Ascending aorta (tissue), 2 donors: ENCODE measurements at regions of chrX and their contacts with region 1.

Region 1: DNA sequence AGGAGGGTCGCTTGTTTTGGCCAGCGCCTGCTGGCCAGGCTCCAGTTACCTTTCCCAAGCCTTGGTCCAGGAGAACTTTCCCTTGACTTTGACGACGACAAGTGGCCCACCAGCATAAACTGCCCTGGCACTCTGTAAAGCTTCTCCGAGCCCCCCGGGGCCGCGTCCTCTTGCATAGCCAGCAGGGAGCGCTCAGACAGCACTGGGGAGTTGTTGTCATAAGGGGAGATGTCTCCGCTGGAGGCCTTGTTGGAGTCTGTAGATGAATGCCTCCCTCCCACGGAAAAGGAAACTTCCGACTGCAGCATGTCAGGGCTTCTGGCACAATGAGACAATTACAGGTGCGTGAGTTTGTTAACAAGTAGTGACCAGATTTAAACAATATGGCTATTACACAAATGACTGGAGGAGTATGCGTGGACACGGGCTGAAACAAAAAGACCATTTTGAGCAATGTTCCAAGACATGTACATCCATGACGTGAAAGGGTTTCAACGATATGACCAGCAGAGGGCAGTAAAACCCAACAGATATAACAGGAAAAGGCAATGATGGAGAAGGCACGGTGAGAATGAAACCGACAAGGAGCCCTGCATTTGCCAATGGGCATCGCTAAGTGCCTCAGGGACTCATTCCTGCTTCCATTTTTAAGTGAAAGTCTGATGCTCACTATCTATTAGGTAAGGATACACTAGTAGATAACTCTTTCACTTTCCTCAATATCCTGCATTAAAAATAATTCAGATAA is 33.0 kb downstream of the HCCS start:
- DNase-seq: peak in 1 of 2 donors; percentile 76
- H3K4me3 ChIP-seq: no peak overlapping the region
- H3K27ac ChIP-seq: no peak overlapping the region
- H3K4me1 ChIP-seq: no peaks in the 10 kb centered on the region
- H3K27me3 ChIP-seq: no peaks in the 10 kb centered on the region
- CTCF ChIP-seq: peak; percentile 51 to 66 (median 59)

Region 2: DNA sequence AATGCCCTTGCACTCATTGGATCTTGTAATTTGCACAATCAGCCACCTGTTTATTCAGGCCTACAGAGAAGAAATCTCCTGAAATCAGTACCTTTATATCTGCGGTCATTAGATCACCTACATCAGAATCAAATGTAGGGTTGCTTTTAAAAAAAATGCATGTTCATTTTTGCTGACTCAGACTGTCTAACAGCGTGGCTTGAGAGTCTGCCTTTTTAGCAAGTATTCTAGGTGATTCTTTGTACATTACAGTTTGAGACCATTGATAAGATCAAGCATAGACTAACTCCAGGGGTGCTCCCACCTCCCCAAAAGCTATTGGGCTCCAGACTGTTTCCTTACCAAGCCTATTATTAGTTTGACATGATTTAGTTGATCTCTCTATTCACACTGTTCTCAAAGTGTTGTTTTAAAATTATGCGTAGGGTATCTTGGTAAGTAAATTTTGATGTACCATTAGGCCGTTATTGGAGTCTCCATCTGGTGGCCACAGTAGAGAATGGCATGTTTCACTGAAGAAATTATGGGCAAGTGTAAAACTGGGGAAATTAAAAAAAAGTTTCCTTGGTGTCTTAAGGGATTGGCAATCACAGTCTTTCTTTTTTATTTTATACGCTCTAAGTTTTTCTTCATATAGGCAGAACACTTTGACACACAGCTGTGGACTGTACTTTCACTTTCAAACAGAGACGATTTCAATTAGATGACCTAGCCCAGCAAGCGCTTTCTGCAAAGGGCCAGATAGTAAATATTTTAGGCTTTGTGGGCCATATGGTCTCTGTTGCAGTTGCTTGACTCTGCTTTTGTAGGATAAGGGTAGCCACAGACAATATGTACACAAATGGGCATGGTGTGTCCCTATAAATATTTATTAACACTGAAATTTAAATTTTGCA is 580.3 kb after region 1 on chrX:
- intact Hi-C with region 1: loop called (anchors 2 kb)
- DNase-seq: no peak
- H3K4me3 ChIP-seq: no peak overlapping the region
- H3K27ac ChIP-seq: no peak overlapping the region
- H3K4me1 ChIP-seq: no peaks in the 10 kb centered on the region
- H3K27me3 ChIP-seq: no peaks in the 10 kb centered on the region
- CTCF ChIP-seq: peak; percentile 44 to 68 (median 64)